Activated CD4-positive, alpha-beta memory T cell treated with anti-CD3 and anti-CD28 coated beads, Interleukin-2, amount 10 ng/mL, durations not matched to agents 7 days and 5 days (primary cell): ENCODE measurements at regions of chr15 and their contacts with region 1.

Region 1: GRCh38 chr15:75042730-75043508 is 19.5 kb downstream of the PPCDC start:
- DNase-seq: peak; percentile 92
- H3K4me3 Mint-ChIP-seq: peak overlapping the region; percentile 74
- H3K27ac Mint-ChIP-seq: peak overlapping the region; percentile 86
- H3K4me1 Mint-ChIP-seq: peaks cover 91% of the 10 kb centered on the region
- H3K27me3 Mint-ChIP-seq: no peaks in the 10 kb centered on the region

Region 2: GRCh38 chr15:75029378-75030022 is 13.4 kb before region 1 on chr15:
- CTCF ChIA-PET with region 1: interaction called, 39 read pairs
- POLR2A ChIA-PET with region 1: interaction called, 21 read pairs
- DNase-seq: peak; percentile 91
- H3K4me3 Mint-ChIP-seq: no peak overlapping the region
- H3K27ac Mint-ChIP-seq: peak overlapping the region; percentile 59
- H3K4me1 Mint-ChIP-seq: peaks cover 42% of the 10 kb centered on the region
- H3K27me3 Mint-ChIP-seq: no peaks in the 10 kb centered on the region

Region 3: GRCh38 chr15:75149867-75150709 is 107.2 kb after region 1 on chr15:
- CTCF ChIA-PET with region 1: no interaction called
- POLR2A ChIA-PET with region 1: no interaction called
- DNase-seq: peak; percentile 26
- H3K4me3 Mint-ChIP-seq: no peak overlapping the region
- H3K27ac Mint-ChIP-seq: no peak overlapping the region
- H3K4me1 Mint-ChIP-seq: peaks cover 29% of the 10 kb centered on the region
- H3K27me3 Mint-ChIP-seq: peaks cover 11% of the 10 kb centered on the region